Activated T-helper 1 cell treated with anti-CD3 and anti-CD28 coated beads, Interleukin-12 subunit alpha, Interleukin-12 subunit beta, Interleukin-2, Interleukin-4 antibody, amounts not matched to agents 30 ng/mL and 10 ng/mL and 1 ng/mL, durations not matched to agents 14 hours and 24 hours and 36 hours (primary cell): ENCODE measurements at regions of chr5 and their contacts with region 1.

Region 1: GRCh38 chr5:132064738-132065331 is 4.4 kb downstream of the IL3 start:
- DNase-seq: peak; percentile 70
- H3K4me3 Mint-ChIP-seq: no peak overlapping the region
- H3K27ac Mint-ChIP-seq: peak overlapping the region; percentile 83
- H3K4me1 Mint-ChIP-seq: peaks cover 83% of the 10 kb centered on the region
- H3K27me3 Mint-ChIP-seq: peaks cover 3% of the 10 kb centered on the region

Region 2: DNA sequence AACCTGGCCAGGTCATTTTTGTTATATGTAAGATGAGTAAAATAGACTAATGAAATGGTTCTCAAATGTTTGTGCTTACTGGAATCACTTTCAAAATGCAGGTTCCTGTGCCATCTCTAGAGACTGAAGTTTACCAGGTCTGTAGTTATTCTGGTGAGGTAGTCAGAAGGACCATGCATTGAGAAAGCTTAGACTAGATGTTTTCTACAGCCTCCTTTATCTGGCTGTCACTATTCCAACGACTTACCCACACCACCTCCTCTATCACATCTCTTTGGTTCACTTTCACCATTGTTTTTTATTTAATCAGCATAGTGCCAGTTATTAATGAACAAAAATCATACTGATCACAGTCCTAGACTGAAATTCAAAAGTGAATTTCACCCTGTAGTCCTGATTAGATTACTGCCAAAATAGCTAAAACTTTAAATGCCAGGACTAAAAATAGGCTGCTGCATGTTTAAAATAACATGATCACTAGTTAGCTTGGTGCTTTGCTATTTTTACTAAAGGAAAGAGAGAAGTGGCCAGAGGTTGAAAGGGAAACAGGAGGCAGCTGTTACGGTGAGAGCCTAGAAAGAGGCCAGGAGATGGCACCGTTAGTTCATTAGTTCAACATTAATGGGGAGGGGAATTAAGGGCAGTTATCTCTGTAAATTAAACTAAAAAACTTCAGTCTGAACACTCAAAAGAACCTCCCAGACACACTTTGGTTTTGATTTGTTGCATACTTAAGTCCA is 254.2 kb before region 1 on chr5:
- intact Hi-C with region 1: loop called (anchors 5 kb)
- DNase-seq: no peak
- H3K4me3 Mint-ChIP-seq: no peak overlapping the region
- H3K27ac Mint-ChIP-seq: no peak overlapping the region
- H3K4me1 Mint-ChIP-seq: no peaks in the 10 kb centered on the region
- H3K27me3 Mint-ChIP-seq: peaks cover 17% of the 10 kb centered on the region

Region 3: GRCh38 chr5:132046880-132047299 is 17.9 kb before region 1 on chr5:
- intact Hi-C with region 1: loop called (anchors 2 kb)
- DNase-seq: no peak
- H3K4me3 Mint-ChIP-seq: no peak overlapping the region
- H3K27ac Mint-ChIP-seq: no peak overlapping the region
- H3K4me1 Mint-ChIP-seq: peaks cover 10% of the 10 kb centered on the region
- H3K27me3 Mint-ChIP-seq: peaks cover 43% of the 10 kb centered on the region

Region 4: DNA sequence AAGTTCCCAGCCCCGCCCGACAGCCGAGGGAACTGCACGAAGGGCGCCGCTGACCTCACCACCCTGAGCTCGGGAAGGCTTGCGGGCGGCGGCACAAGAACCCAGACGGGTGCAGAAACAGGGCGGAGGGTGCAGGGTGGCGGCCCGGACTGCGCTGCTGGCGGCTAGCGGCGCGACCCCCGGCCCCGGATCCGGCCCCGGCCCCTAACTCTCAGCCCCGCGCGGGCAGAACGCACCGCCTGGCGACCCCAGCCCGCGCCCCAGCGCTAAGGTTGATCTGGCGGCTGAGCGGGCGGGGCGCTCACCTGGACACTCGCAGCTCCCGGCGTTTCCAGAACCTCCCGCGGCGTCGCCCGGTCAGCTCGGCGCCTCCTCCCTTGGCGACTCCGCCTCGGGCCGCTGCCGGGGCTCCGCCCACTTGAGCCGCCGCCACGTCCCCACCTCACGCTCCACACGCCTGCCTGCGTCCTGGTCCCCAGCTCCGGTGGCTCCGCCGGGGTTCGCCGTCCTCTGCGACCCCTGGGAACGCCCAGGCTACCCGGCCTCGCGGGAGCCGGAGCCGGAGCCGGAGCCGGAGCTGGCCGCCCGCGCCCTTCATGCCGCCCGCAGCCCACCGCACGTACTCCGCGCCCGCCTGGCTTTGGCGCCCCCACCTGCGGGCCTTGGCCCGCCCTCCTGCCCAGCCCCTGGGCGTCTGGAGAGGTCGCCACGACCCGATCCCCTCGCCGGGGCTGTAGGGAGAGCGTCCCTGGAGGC is 162.8 kb after region 1 on chr5 and contains the start of gene P4HA2:
- intact Hi-C with region 1: loop called (anchors 2 kb)
- DNase-seq: peak; percentile 52
- H3K4me3 Mint-ChIP-seq: peak within 1 kb of the TSS; percentile 82
- H3K27ac Mint-ChIP-seq: no peak within 1 kb of the TSS
- H3K4me1 Mint-ChIP-seq: peaks cover 55% of the 10 kb centered on the region
- H3K27me3 Mint-ChIP-seq: peaks cover 14% of the 10 kb centered on the region
- total RNA-seq, gene P4HA2: 48.7 and 49.4 TPM in 2 replicates

Region 5: DNA sequence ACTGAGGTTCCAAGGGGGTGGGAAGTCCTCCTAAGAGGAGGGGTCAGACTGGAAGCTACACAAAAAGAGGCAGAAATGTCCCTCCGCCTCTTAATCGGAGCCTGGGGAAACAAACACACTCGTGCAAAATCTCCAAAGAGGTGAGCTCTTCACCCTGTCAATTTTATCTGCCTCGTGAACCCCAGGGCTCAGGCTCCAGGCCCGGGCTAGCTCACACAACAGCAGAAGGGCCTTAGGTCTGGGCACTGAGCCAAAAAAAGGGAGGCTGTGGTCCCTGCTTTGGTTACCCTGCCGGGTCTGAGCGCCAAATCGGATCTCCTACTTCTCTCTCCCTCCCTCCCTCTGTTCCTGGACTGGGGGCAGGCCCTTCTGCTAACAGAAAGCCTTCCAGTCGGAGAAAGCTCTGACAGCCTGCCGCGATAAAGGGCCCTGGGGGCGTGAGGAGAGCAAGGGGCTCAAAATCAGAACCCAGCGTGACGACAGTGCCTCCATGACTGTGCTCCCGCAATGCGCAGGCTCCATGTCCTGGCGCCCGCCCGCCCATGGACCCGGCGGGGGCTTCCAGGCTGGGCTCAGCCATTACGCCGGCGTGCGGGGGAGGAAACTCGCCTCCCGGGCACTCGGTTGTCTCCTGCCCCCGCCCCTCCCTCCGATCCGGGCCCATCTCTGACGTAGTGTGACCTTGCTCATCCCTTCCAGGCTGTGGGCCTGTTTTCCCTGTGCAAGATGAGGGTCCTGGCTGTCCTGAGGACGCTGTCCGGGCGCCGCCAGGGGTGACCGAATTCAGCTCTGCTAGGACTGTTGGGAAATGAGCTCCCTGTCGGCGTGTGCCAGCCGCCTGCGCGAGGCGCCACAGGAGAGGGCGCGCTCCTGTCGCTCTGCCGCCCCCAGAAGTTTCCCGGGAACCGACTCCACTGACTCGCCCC is 228.5 kb after region 1 on chr5:
- intact Hi-C with region 1: loop called (anchors 2 kb)
- DNase-seq: peak; percentile 53
- H3K4me3 Mint-ChIP-seq: peak overlapping the region; percentile 93
- H3K27ac Mint-ChIP-seq: peak overlapping the region; percentile 75
- H3K4me1 Mint-ChIP-seq: peaks cover 30% of the 10 kb centered on the region
- H3K27me3 Mint-ChIP-seq: peaks cover 15% of the 10 kb centered on the region

Region 6: GRCh38 chr5:132500931-132501630 is 436.2 kb after region 1 on chr5:
- intact Hi-C with region 1: loop called (anchors 1 kb)
- DNase-seq: peak; percentile 66
- H3K4me3 Mint-ChIP-seq: no peak overlapping the region
- H3K27ac Mint-ChIP-seq: peak overlapping the region; percentile 72
- H3K4me1 Mint-ChIP-seq: peaks cover 54% of the 10 kb centered on the region
- H3K27me3 Mint-ChIP-seq: peaks cover 6% of the 10 kb centered on the region

Region 7: DNA sequence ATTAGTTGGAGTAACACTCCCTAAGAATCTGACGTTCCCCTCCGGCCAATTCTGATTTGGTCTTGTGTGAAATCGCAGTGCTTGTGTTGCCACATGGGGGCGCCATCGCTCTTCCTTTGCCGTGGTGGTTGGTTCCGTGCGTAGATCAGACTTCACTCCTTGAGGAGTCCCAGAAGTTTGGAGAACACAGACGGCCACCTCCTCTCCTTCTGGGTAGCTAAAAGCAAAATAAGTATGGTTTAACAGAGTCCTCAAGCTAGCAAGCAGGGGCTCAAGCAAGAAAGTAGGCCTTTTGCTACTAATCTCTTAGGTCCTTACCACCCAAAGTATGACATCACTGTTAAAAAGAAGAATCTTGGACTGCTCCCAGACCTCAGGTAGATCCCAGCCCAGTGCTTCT is 1046.5 kb after region 1 on chr5:
- intact Hi-C with region 1: no loop called
- DNase-seq: peak; percentile 69
- H3K4me3 Mint-ChIP-seq: no peak overlapping the region
- H3K27ac Mint-ChIP-seq: no peak overlapping the region
- H3K4me1 Mint-ChIP-seq: peaks cover 46% of the 10 kb centered on the region
- H3K27me3 Mint-ChIP-seq: peaks cover 2% of the 10 kb centered on the region